ENCODE measurements at regions of chr15 and their contacts with region 1.

Region 1: GRCh38 chr15:25106209-25106608 is 151.4 kb downstream of the SNRPN start:
- DNase-seq: no peak
- H3K4me3 ChIP-seq: no peak overlapping the region
- H3K27me3 ChIP-seq: no peaks in the 10 kb centered on the region; the same call in 1 of the 2 replicates
- CTCF ChIP-seq: no peak

Region 2: DNA sequence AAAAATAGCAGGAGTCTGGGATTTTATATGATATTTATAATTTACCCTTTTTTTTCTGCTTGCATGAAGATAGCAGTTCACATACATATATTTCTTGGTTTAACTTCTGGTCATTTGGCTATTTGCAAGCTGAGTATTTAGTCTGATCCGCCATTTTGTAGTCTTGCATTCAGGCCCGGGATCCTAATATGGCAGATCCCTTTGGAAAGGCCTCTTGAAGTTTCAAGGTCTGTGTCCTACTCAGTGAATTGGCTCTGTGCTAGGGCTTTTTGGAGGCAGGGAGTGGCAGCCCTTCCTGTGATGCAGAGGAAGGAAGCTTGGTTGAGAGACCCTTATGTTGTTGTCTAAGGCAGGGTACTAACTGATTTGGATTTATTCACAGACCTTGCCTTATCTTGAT is 148.5 kb before region 1 on chr15:
- CTCF ChIA-PET with region 1: no interaction called
- POLR2A ChIA-PET with region 1: interaction called, 10 read pairs
- DNase-seq: no peak
- H3K4me3 ChIP-seq: no peak overlapping the region
- H3K27me3 ChIP-seq: no peaks in the 10 kb centered on the region
- CTCF ChIP-seq: no peak